Heart left ventricle (tissue), 16 donors: ENCODE measurements at regions of chr6 and their contacts with region 1.

Region 1: GRCh38 chr6:67694120-67694519 is 941.0 kb upstream of the ADGRB3 start:
- DNase-seq: no peak
- ATAC-seq: no peak
- H3K4me3 ChIP-seq: no peak overlapping the region
- H3K27ac ChIP-seq: no peak overlapping the region
- H3K4me1 ChIP-seq: no peaks in the 10 kb centered on the region
- H3K27me3 ChIP-seq: no peaks in the 10 kb centered on the region
- CTCF ChIP-seq: no peak
- POLR2A ChIP-seq: no peak

Region 2: GRCh38 chr6:67221226-67221625 is 472.9 kb before region 1 on chr6:
- intact Hi-C with region 1: no loop called
- DNase-seq: no peak
- ATAC-seq: no peak
- H3K4me3 ChIP-seq: no peak overlapping the region
- H3K27ac ChIP-seq: no peak overlapping the region
- H3K4me1 ChIP-seq: no peaks in the 10 kb centered on the region
- H3K27me3 ChIP-seq: no peaks in the 10 kb centered on the region
- CTCF ChIP-seq: no peak
- POLR2A ChIP-seq: no peak

Region 3: GRCh38 chr6:67646550-67646949 is 47.6 kb before region 1 on chr6:
- intact Hi-C with region 1: loop called in 1 of 10 experiments (anchors 2 kb)
- DNase-seq: no peak
- ATAC-seq: no peak
- H3K4me3 ChIP-seq: no peak overlapping the region
- H3K27ac ChIP-seq: no peak overlapping the region
- H3K4me1 ChIP-seq: no peaks in the 10 kb centered on the region
- H3K27me3 ChIP-seq: no peaks in the 10 kb centered on the region
- CTCF ChIP-seq: no peak
- POLR2A ChIP-seq: no peak

Region 4: GRCh38 chr6:68158256-68158655 is 464.1 kb after region 1 on chr6:
- intact Hi-C with region 1: no loop called
- DNase-seq: no peak
- ATAC-seq: no peak
- H3K4me3 ChIP-seq: no peak overlapping the region
- H3K27ac ChIP-seq: no peak overlapping the region
- H3K4me1 ChIP-seq: no peaks in the 10 kb centered on the region
- H3K27me3 ChIP-seq: no peaks in the 10 kb centered on the region
- CTCF ChIP-seq: no peak
- POLR2A ChIP-seq: no peak